Caco-2 (cell line): ENCODE measurements at regions of chr3 and their contacts with region 1.

Region 1: GRCh38 chr3:161560008-161560637 is 63.5 kb downstream of the OTOL1 start:
- DNase-seq: peak; percentile 36 to 47
- H3K4me3 ChIP-seq: no peak overlapping the region
- H3K4me3 Mint-ChIP-seq: no peak overlapping the region
- H3K27ac Mint-ChIP-seq: no peak overlapping the region
- H3K4me1 ChIP-seq: no peaks in the 10 kb centered on the region
- H3K4me1 Mint-ChIP-seq: no peaks in the 10 kb centered on the region
- H3K27me3 ChIP-seq: no peaks in the 10 kb centered on the region
- H3K27me3 Mint-ChIP-seq: peaks cover 6% of the 10 kb centered on the region
- CTCF ChIP-seq: peak; percentile 53 to 56

Region 2: GRCh38 chr3:161142486-161142885 is 417.6 kb before region 1 on chr3:
- CTCF ChIA-PET with region 1: no interaction called
- POLR2A ChIA-PET with region 1: no interaction called
- intact Hi-C with region 1: no loop called
- DNase-seq: no peak
- H3K4me3 ChIP-seq: no peak overlapping the region
- H3K4me3 Mint-ChIP-seq: no peak overlapping the region
- H3K27ac Mint-ChIP-seq: no peak overlapping the region
- H3K4me1 ChIP-seq: no peaks in the 10 kb centered on the region
- H3K4me1 Mint-ChIP-seq: no peaks in the 10 kb centered on the region
- H3K27me3 ChIP-seq: no peaks in the 10 kb centered on the region
- H3K27me3 Mint-ChIP-seq: no peaks in the 10 kb centered on the region
- CTCF ChIP-seq: no peak

Region 3: DNA sequence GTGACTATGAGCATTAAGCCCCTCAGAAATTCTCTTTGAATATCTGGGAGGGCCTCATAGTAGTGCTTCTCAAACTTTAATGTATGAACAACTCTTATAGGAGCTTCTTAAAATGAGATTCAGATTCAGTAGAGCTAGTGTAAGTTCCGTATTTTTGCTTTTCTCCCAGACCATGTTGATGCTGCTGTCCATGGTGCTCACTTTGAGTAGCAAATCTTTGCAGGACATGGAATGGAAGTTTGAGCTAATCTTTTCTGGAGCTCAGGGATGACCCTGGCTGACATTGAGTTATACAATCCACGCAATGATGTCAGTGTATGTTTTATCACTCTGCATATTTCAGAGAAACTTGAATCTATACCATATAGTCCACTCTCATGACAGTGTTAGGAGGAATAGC is 70.7 kb after region 1 on chr3:
- CTCF ChIA-PET with region 1: no interaction called
- POLR2A ChIA-PET with region 1: no interaction called
- intact Hi-C with region 1: no loop called
- DNase-seq: peak in 1 of 2 experiments; percentile 4
- H3K4me3 ChIP-seq: no peak overlapping the region
- H3K4me3 Mint-ChIP-seq: no peak overlapping the region
- H3K27ac Mint-ChIP-seq: no peak overlapping the region
- H3K4me1 ChIP-seq: no peaks in the 10 kb centered on the region
- H3K4me1 Mint-ChIP-seq: no peaks in the 10 kb centered on the region
- H3K27me3 ChIP-seq: no peaks in the 10 kb centered on the region
- H3K27me3 Mint-ChIP-seq: peaks cover 6% of the 10 kb centered on the region
- CTCF ChIP-seq: no peak

Region 4: GRCh38 chr3:161672478-161672877 is 112.4 kb after region 1 on chr3:
- CTCF ChIA-PET with region 1: no interaction called
- POLR2A ChIA-PET with region 1: no interaction called
- intact Hi-C with region 1: no loop called
- DNase-seq: no peak
- H3K4me3 ChIP-seq: no peak overlapping the region
- H3K4me3 Mint-ChIP-seq: no peak overlapping the region
- H3K27ac Mint-ChIP-seq: no peak overlapping the region
- H3K4me1 ChIP-seq: no peaks in the 10 kb centered on the region
- H3K4me1 Mint-ChIP-seq: no peaks in the 10 kb centered on the region
- H3K27me3 ChIP-seq: no peaks in the 10 kb centered on the region
- H3K27me3 Mint-ChIP-seq: peaks cover 4% of the 10 kb centered on the region
- CTCF ChIP-seq: no peak

Region 5: GRCh38 chr3:161914737-161915417 is 354.8 kb after region 1 on chr3:
- CTCF ChIA-PET with region 1: no interaction called
- POLR2A ChIA-PET with region 1: no interaction called
- intact Hi-C with region 1: loop called (anchors 10 kb)
- DNase-seq: peak; percentile 46 to 50
- H3K4me3 ChIP-seq: no peak overlapping the region
- H3K4me3 Mint-ChIP-seq: no peak overlapping the region
- H3K27ac Mint-ChIP-seq: no peak overlapping the region
- H3K4me1 ChIP-seq: no peaks in the 10 kb centered on the region
- H3K4me1 Mint-ChIP-seq: no peaks in the 10 kb centered on the region
- H3K27me3 ChIP-seq: no peaks in the 10 kb centered on the region
- H3K27me3 Mint-ChIP-seq: no peaks in the 10 kb centered on the region
- CTCF ChIP-seq: peak; percentile 29

Region 6: GRCh38 chr3:162269636-162270458 is 709.7 kb after region 1 on chr3:
- CTCF ChIA-PET with region 1: no interaction called
- POLR2A ChIA-PET with region 1: no interaction called
- intact Hi-C with region 1: no loop called
- DNase-seq: no peak
- H3K4me3 ChIP-seq: no peak overlapping the region
- H3K4me3 Mint-ChIP-seq: no peak overlapping the region
- H3K27ac Mint-ChIP-seq: no peak overlapping the region
- H3K4me1 ChIP-seq: no peaks in the 10 kb centered on the region
- H3K4me1 Mint-ChIP-seq: no peaks in the 10 kb centered on the region
- H3K27me3 ChIP-seq: no peaks in the 10 kb centered on the region
- H3K27me3 Mint-ChIP-seq: no peaks in the 10 kb centered on the region
- CTCF ChIP-seq: no peak